ENCODE measurements at regions of chr16 and their contacts with region 1.

Region 1: DNA sequence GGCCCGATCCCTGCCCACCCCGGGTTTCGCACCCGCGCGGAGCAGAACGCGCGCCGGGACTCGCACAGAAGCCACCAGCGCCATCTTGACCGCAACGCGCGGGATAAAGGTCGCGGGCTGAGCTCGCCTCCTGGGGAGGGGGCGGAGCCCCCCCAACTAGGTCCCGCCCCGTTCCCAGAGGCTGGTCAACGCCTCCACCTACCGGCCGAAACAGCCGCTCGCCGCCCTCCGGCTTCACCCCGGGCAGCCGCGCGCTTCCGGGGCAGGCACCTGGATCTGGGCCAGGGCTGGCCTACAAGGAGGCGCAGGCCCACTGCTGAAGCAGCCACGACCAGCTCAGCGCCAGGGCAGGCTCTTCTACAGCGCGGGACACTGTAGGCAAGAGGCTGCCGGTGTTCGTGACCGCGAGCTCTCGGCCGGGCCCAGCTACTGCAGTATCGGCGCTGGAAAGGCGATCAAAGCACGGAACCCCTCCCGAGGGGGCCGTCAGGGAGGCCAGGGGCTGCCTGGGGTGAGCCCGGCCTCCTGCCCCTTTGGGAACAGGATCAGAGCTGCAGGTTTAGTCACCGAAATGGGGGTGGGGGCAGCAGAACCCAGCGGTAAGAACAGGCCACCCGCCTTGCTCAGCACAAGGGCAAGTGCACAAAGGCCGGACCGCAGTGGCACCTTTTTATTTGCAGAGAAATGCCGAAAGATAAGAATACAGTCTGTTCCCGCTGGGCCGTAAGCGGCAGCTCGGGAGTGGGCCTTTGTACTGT is at the start of gene ECI1:
- DNase-seq: peak; percentile 85
- ATAC-seq: peak; percentile 89
- H3K4me3 ChIP-seq: peak within 1 kb of the TSS; percentile 66 to 75
- H3K27ac ChIP-seq: peak within 1 kb of the TSS; percentile 89
- H3K4me1 ChIP-seq: peaks cover 15 to 31% of the 10 kb centered on the region in 2 experiments
- H3K27me3 ChIP-seq: no peaks in the 10 kb centered on the region
- CTCF ChIP-seq: peak; percentile 43 to 59 (median 49); a peak in 5 of 6 replicates
- POLR2A ChIP-seq: peak; percentile 87
- RAD21 ChIP-seq: peak; percentile 86
- total RNA-seq, gene ECI1: 140 TPM

Region 2: GRCh38 chr16:2023098-2023925 is 228.3 kb before region 1 on chr16:
- CTCF ChIA-PET with region 1: no interaction called
- POLR2A ChIA-PET with region 1: no interaction called
- RAD21 ChIA-PET with region 1: no interaction called
- intact Hi-C with region 1: loop called (anchors 10 kb)
- DNase-seq: peak; percentile 77
- ATAC-seq: peak; percentile 64
- H3K4me3 ChIP-seq: peak overlapping the region; percentile 36 to 50
- H3K27ac ChIP-seq: peak overlapping the region; percentile 88
- H3K4me1 ChIP-seq: peaks cover 42 to 67% of the 10 kb centered on the region in 2 experiments
- H3K27me3 ChIP-seq: no peaks in the 10 kb centered on the region
- CTCF ChIP-seq: peak in 2 of 3 experiments; percentile 91 to 92; a peak in 4 of 6 replicates
- POLR2A ChIP-seq: peak; percentile 35
- RAD21 ChIP-seq: no peak

Region 3: GRCh38 chr16:2155091-2156021 is 96.3 kb before region 1 on chr16 and contains the start of gene TRAF7:
- CTCF ChIA-PET with region 1: interaction called, 3 read pairs
- POLR2A ChIA-PET with region 1: interaction called, 21 read pairs
- RAD21 ChIA-PET with region 1: no interaction called
- intact Hi-C with region 1: loop called (anchors 2 kb)
- DNase-seq: peak; percentile 100
- ATAC-seq: peak; percentile 74
- H3K4me3 ChIP-seq: peak within 1 kb of the TSS; percentile 98 to 100
- H3K27ac ChIP-seq: peak within 1 kb of the TSS; percentile 84
- H3K4me1 ChIP-seq: peaks cover 48 to 74% of the 10 kb centered on the region in 2 experiments
- H3K27me3 ChIP-seq: no peaks in the 10 kb centered on the region
- CTCF ChIP-seq: no peak
- POLR2A ChIP-seq: peak; percentile 99
- RAD21 ChIP-seq: no peak
- total RNA-seq, gene TRAF7: 160 TPM

Region 4: GRCh38 chr16:2194852-2195321 is 56.8 kb before region 1 on chr16:
- CTCF ChIA-PET with region 1: interaction called, 24 read pairs
- POLR2A ChIA-PET with region 1: interaction called, 5 read pairs
- RAD21 ChIA-PET with region 1: interaction called in 1 of 2 experiments, 5 read pairs
- intact Hi-C with region 1: loop called (anchors 2 kb)
- DNase-seq: no peak
- ATAC-seq: peak; percentile 81
- H3K4me3 ChIP-seq: no peak overlapping the region
- H3K27ac ChIP-seq: no peak overlapping the region; the same call in 1 of the 2 replicates
- H3K4me1 ChIP-seq: peaks cover 5 to 19% of the 10 kb centered on the region in 2 experiments
- H3K27me3 ChIP-seq: no peaks in the 10 kb centered on the region
- CTCF ChIP-seq: peak; percentile 62 to 73 (median 63)
- POLR2A ChIP-seq: no peak
- RAD21 ChIP-seq: peak; percentile 93

Region 5: DNA sequence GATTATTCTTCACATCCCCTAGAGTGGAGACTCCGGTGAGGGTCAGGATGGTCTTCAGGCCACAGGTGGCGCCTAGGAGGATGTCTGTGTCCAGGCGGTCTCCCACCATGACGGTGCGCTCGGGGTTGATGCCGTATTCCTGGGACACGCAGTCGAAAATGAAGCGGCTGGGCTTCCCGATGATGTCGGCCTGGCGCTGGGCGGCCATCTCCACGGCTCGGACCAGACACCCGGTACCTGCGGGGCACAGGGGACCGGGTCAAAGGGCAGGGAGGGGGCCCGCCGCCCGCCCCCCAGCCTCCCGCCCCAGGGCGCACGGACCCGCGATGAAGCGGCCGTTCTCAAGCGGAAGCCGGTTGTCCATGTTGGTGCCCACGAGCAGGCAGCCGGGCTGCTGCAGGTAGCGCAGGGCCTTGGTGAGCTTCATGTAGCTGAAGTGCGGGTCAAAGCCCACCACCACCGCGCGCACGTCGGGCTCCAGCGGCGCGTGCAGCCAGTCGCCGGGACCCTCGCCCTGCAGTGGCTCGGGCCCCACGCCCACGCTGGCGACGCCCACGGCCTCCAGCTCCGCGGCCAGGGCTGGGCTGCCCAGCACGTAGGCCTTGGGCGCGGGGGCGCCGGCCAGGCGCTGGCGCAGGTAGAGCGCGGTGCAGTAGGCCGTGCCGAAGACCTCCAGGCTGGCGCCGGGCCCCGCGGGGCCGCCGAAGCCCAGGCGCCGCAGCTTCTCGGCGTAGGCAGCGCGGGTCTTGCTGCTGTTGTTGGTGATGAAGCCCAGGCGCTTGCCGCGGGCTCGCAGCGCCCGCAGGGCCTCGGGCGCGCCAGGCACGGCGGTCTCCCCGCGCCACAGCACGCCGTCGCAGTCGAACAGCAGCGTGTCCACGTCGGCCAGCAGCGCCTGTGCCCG is 37.6 kb before region 1 on chr16:
- CTCF ChIA-PET with region 1: interaction called, 13 read pairs
- POLR2A ChIA-PET with region 1: interaction called, 17 read pairs
- RAD21 ChIA-PET with region 1: no interaction called
- intact Hi-C with region 1: no loop called
- DNase-seq: no peak
- ATAC-seq: peak; percentile 0; the same call in 1 of the 2 replicates
- H3K4me3 ChIP-seq: peak overlapping the region; percentile 62 to 84
- H3K27ac ChIP-seq: peak overlapping the region; percentile 98
- H3K4me1 ChIP-seq: peaks cover 23 to 37% of the 10 kb centered on the region in 2 experiments
- H3K27me3 ChIP-seq: no peaks in the 10 kb centered on the region
- CTCF ChIP-seq: no peak
- POLR2A ChIP-seq: no peak
- RAD21 ChIP-seq: no peak

Region 6: DNA sequence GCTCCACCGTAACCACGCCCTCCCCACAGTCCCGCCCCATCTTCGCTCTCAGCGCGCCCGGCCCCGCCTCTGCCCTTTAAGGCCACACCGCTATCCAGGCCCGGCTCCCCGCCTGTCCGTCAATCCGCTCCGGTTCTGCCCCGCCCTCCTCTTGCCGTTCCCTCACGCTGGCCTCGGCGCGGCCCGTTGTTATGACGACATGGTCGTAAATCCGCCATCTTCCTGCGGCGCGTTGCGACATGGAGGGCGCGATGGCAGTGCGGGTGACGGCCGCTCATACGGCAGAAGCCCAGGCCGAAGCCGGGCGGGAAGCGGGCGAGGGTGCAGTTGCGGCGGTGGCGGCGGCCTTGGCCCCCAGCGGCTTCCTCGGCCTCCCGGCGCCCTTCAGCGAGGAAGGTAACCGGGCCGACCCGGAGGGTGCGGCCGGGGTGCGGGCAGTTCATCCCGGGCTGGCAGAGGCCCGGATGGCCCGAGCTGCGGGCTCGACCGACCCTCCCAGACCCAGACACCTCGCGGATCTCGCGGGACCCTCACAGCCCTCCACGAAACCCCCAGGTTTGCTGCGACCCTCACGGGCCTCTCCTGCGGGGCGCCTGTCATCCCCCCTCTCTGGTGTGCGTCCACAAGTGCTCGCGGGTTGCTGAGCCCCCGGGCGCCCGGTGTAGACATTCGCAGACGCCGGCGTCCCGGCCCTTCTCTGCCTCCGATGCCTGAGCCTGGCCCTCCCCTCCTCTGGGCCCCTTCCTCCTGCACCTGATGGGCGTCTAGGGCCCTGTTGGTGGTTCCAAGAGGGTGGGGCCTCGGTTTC is 28.1 kb before region 1 on chr16 and contains the start of gene E4F1:
- CTCF ChIA-PET with region 1: interaction called, 4 read pairs
- POLR2A ChIA-PET with region 1: interaction called, 5 read pairs
- RAD21 ChIA-PET with region 1: no interaction called
- intact Hi-C with region 1: loop called (anchors 1 kb)
- DNase-seq: peak; percentile 99
- ATAC-seq: peak; percentile 93
- H3K4me3 ChIP-seq: peak within 1 kb of the TSS; percentile 73 to 98
- H3K27ac ChIP-seq: peak within 1 kb of the TSS; percentile 97
- H3K4me1 ChIP-seq: peaks cover 25 to 30% of the 10 kb centered on the region in 2 experiments
- H3K27me3 ChIP-seq: no peaks in the 10 kb centered on the region
- CTCF ChIP-seq: no peak
- POLR2A ChIP-seq: peak; percentile 87
- RAD21 ChIP-seq: no peak
- total RNA-seq, gene E4F1: 40.7 TPM

Measured in HCT116 (cell line).